ENCODE measurements at regions of chr10 and their contacts with region 1.

Region 1: DNA sequence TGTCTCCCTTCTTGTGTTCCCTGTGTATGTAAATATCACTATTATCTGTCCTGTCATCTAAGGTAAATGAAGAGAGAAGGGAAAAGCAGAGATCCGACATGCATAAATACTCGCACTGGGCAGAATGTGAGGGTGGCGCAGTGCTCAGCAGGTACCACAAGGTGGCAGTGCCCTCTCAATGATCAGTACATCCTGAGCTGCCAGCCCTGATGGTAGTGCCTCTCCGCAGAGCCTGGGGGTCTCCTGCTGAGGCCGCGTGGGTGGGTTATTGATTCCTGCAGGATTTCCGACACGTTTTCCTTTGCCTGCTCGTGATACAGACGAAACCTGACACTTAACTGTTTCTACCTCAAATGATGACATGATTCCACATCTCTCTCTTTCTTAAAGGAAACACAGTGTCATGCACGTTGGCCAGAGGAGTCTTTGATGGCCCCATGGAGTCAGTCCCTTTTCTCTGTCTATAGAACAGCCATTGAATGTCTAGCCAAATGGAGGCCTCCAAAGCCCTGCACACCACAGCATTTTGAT is 19.8 kb downstream of the RGR start:
- DNase-seq: peak; percentile 48 to 76 (median 58)
- H3K4me3 ChIP-seq: no peak overlapping the region
- H3K4me3 Mint-ChIP-seq: no peak overlapping the region
- H3K27ac ChIP-seq: no peak overlapping the region
- H3K27ac Mint-ChIP-seq: no peak overlapping the region
- H3K4me1 ChIP-seq: no peaks in the 10 kb centered on the region
- H3K4me1 Mint-ChIP-seq: peaks cover 5 to 13% (median 9%) of the 10 kb centered on the region in 3 donors
- H3K27me3 ChIP-seq: peaks cover 5% of the 10 kb centered on the region
- H3K27me3 Mint-ChIP-seq: peaks cover 9 to 39% of the 10 kb centered on the region in 2 donors

Region 2: GRCh38 chr10:84156768-84157167 is 107.9 kb before region 1 on chr10:
- CTCF ChIA-PET with region 1: no interaction called
- POLR2A ChIA-PET with region 1: no interaction called
- DNase-seq: peak in 4 of 5 donors; percentile 25 to 67 (median 36)
- H3K4me3 ChIP-seq: no peak overlapping the region
- H3K4me3 Mint-ChIP-seq: peak overlapping the region in 2 of 7 donors; percentile 56
- H3K27ac ChIP-seq: no peak overlapping the region
- H3K27ac Mint-ChIP-seq: peak overlapping the region; percentile 1 to 91 (median 89)
- H3K4me1 ChIP-seq: peaks cover 4% of the 10 kb centered on the region
- H3K4me1 Mint-ChIP-seq: peaks cover 13 to 28% (median 16%) of the 10 kb centered on the region in 3 donors
- H3K27me3 ChIP-seq: no peaks in the 10 kb centered on the region
- H3K27me3 Mint-ChIP-seq: no peaks in the 10 kb centered on the region

Region 3: GRCh38 chr10:84333864-84334451 is 69.3 kb after region 1 on chr10:
- CTCF ChIA-PET with region 1: interaction called, 10 read pairs
- POLR2A ChIA-PET with region 1: no interaction called
- DNase-seq: peak; percentile 56 to 93 (median 86)
- H3K4me3 ChIP-seq: peak overlapping the region; percentile 12
- H3K4me3 Mint-ChIP-seq: peak overlapping the region; percentile 31 to 81 (median 63)
- H3K27ac ChIP-seq: peak overlapping the region; percentile 55
- H3K27ac Mint-ChIP-seq: peak overlapping the region in 2 of 8 donors; percentile 83 to 95
- H3K4me1 ChIP-seq: peaks cover 72% of the 10 kb centered on the region
- H3K4me1 Mint-ChIP-seq: peaks cover 32 to 55% (median 40%) of the 10 kb centered on the region in 3 donors
- H3K27me3 ChIP-seq: no peaks in the 10 kb centered on the region
- H3K27me3 Mint-ChIP-seq: no peaks in the 10 kb centered on the region